A673 (cell line): ENCODE measurements at regions of chr15 and their contacts with region 1.

Region 1: DNA sequence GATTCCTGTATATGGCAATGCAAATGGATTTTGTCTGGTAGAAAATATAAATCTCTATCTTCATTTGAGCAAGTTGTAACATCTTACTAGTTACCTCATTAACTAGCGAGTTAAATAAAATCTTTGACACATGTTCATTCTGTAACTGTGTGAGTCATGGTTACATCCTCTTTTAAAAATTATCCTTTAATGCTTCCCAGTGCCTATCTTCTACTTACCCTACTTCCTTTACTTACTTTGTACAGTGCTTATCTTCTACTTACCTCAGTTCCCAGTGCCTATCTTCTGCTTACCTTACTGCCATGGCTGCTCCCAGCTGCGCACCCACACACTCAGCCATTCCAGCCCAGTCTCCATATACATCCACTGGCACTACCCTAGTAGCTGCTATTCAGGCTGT is 71.9 kb upstream of the GOLGA8B start:
- DNase-seq: no peak
- H3K4me3 ChIP-seq: no peak overlapping the region
- H3K27ac ChIP-seq: no peak overlapping the region
- H3K4me1 ChIP-seq: no peaks in the 10 kb centered on the region
- H3K27me3 ChIP-seq: no peaks in the 10 kb centered on the region
- CTCF ChIP-seq: no peak

Region 2: DNA sequence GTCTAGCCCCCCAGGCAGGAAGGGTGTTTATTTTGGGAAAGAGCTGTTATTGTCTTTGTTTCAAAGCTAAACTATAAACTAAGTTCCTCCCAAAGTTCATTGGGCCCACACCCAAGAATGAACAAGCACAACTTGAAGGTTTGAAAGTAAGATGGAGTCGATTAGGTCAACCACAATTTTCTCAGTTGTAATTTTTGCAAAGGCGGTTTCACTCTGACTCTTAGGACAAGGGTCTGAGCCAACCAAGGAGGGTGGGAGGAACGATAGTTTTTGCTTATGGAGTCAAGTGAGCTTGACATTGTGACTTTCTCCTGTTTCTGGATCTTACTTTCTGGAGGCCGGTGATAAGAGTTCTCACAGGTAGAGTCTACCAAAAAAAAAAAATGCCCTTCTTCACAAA is 338.6 kb after region 1 on chr15:
- CTCF ChIA-PET with region 1: no interaction called
- POLR2A ChIA-PET with region 1: interaction called, 14 read pairs
- intact Hi-C with region 1: no loop called
- DNase-seq: no peak
- H3K4me3 ChIP-seq: no peak overlapping the region
- H3K27ac ChIP-seq: no peak overlapping the region
- H3K4me1 ChIP-seq: no peaks in the 10 kb centered on the region
- H3K27me3 ChIP-seq: no peaks in the 10 kb centered on the region
- CTCF ChIP-seq: no peak